ENCODE measurements at regions of chr20 and their contacts with region 1.

Region 1: GRCh38 chr20:34516247-34517113 is at the start of gene DYNLRB1:
- DNase-seq: peak; percentile 97 to 98
- ATAC-seq: peak; percentile 96 to 98 (median 97)
- H3K4me3 ChIP-seq: peak within 1 kb of the TSS; percentile 48 to 92 (median 74)
- H3K27ac ChIP-seq: peak within 1 kb of the TSS; percentile 85 to 98 (median 96)
- H3K4me1 ChIP-seq: peaks cover 0 to 75% (median 43%) of the 10 kb centered on the region in 9 donors
- H3K27me3 ChIP-seq: no peaks in the 10 kb centered on the region
- CTCF ChIP-seq: no peak
- total RNA-seq, gene DYNLRB1: 132 to 187 (median 148) TPM

Region 2: GRCh38 chr20:33862709-33863403 is 653.6 kb before region 1 on chr20:
- intact Hi-C with region 1: loop called in 1 of 10 experiments (anchors 10 kb)
- DNase-seq: peak; percentile 46 to 47
- ATAC-seq: peak; percentile 67 to 85 (median 78)
- H3K4me3 ChIP-seq: peak overlapping the region in 6 of 10 donors; percentile 10 to 27 (median 18)
- H3K27ac ChIP-seq: no peak overlapping the region
- H3K4me1 ChIP-seq: peaks cover 2 to 29% (median 21%) of the 10 kb centered on the region in 9 donors
- H3K27me3 ChIP-seq: no peaks in the 10 kb centered on the region
- CTCF ChIP-seq: peak; percentile 39 to 84 (median 70)

Region 3: DNA sequence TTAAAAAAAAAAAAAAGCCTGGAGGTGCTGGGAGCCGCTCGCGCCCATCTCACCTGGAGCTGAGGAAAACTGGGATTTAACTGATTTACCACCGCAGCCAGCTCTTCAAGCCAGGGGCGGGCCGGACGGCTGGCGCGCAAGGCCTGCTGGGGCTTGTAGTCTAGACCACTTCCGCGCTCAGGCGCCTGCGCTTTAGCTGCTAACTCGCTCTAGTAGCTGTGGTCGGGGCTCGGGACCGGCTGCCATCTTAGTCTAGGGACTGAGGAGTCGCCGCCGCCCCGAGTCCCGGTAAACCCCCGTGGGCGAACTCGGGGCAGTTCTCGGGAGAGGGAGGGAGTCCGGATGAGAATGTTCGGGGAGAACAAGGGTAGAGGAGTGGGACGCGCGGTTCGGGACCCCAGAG is 153.4 kb before region 1 on chr20 and contains the start of gene ITCH:
- intact Hi-C with region 1: no loop called
- DNase-seq: peak; percentile 95 to 96
- ATAC-seq: peak; percentile 99 to 100 (median 100)
- H3K4me3 ChIP-seq: peak within 1 kb of the TSS; percentile 59 to 97 (median 90)
- H3K27ac ChIP-seq: peak within 1 kb of the TSS; percentile 84 to 98 (median 96)
- H3K4me1 ChIP-seq: peaks cover 3 to 48% (median 40%) of the 10 kb centered on the region in 9 donors
- H3K27me3 ChIP-seq: no peaks in the 10 kb centered on the region
- CTCF ChIP-seq: no peak
- total RNA-seq, gene ITCH: 34.1 to 47.5 (median 39.6) TPM

Region 4: GRCh38 chr20:34473262-34473883 is 43.1 kb before region 1 on chr20:
- intact Hi-C with region 1: loop called in 1 of 10 experiments (anchors 5 kb)
- DNase-seq: peak; percentile 26 to 40
- ATAC-seq: peak in 7 of 8 donors; percentile 66 to 92 (median 88)
- H3K4me3 ChIP-seq: no peak overlapping the region
- H3K27ac ChIP-seq: peak overlapping the region in 3 of 10 donors; percentile 10 to 23 (median 22)
- H3K4me1 ChIP-seq: peaks cover 4 to 28% (median 20%) of the 10 kb centered on the region in 9 donors
- H3K27me3 ChIP-seq: no peaks in the 10 kb centered on the region
- CTCF ChIP-seq: peak in 6 of 9 donors; percentile 30 to 59 (median 48)

Region 5: GRCh38 chr20:35368666-35369423 is 852.4 kb after region 1 on chr20:
- intact Hi-C with region 1: loop called in 1 of 10 experiments (anchors 5 kb)
- DNase-seq: peak; percentile 23 to 41
- ATAC-seq: peak; percentile 69 to 97 (median 93)
- H3K4me3 ChIP-seq: no peak overlapping the region
- H3K27ac ChIP-seq: peak overlapping the region in 8 of 10 donors; percentile 22 to 55 (median 36)
- H3K4me1 ChIP-seq: peaks cover 8 to 28% (median 21%) of the 10 kb centered on the region in 9 donors
- H3K27me3 ChIP-seq: no peaks in the 10 kb centered on the region
- CTCF ChIP-seq: no peak